CD4-positive, alpha-beta T cell (primary cell): ENCODE measurements at regions of chr1 and their contacts with region 1.

Region 1: DNA sequence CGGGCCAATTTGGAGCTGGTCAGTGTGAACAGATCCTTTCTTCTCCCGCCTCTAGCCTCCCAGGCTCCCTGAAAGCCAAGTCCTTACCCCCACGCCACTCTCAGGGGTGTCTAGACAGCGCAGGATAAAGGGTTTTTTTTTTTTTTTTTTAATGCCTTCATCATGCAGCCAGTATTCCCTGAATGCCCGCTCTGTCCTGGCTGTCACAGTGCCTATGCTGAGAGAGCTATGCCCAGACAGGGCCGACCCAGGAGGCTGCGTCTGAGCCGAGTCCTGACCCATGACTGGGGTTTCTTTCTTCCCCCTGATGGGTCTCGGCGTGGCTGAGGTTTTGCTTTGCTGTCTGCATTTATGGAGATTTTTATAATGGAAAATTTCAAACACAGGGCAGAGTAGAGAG is 18.3 kb downstream of the SPSB1 start:
- DNase-seq: no peak
- ATAC-seq: no peak
- H3K4me3 ChIP-seq: no peak overlapping the region
- H3K4me3 Mint-ChIP-seq: no peak overlapping the region
- H3K27ac ChIP-seq: no peak overlapping the region
- H3K27ac Mint-ChIP-seq: no peak overlapping the region
- H3K4me1 ChIP-seq: peaks cover 13% of the 10 kb centered on the region
- H3K4me1 Mint-ChIP-seq: peaks cover 26% of the 10 kb centered on the region
- H3K27me3 ChIP-seq: no peaks in the 10 kb centered on the region
- H3K27me3 Mint-ChIP-seq: no peaks in the 10 kb centered on the region
- CTCF ChIP-seq: no peak

Region 2: GRCh38 chr1:9362488-9362887 is 51.5 kb after region 1 on chr1:
- CTCF ChIA-PET with region 1: no interaction called
- POLR2A ChIA-PET with region 1: no interaction called
- intact Hi-C with region 1: loop called in 1 of 2 experiments (anchors 5 kb)
- DNase-seq: no peak
- ATAC-seq: no peak
- H3K4me3 ChIP-seq: no peak overlapping the region
- H3K4me3 Mint-ChIP-seq: no peak overlapping the region
- H3K27ac ChIP-seq: no peak overlapping the region
- H3K27ac Mint-ChIP-seq: no peak overlapping the region
- H3K4me1 ChIP-seq: peaks cover 2% of the 10 kb centered on the region
- H3K4me1 Mint-ChIP-seq: no peaks in the 10 kb centered on the region
- H3K27me3 ChIP-seq: no peaks in the 10 kb centered on the region
- H3K27me3 Mint-ChIP-seq: no peaks in the 10 kb centered on the region
- CTCF ChIP-seq: no peak

Region 3: DNA sequence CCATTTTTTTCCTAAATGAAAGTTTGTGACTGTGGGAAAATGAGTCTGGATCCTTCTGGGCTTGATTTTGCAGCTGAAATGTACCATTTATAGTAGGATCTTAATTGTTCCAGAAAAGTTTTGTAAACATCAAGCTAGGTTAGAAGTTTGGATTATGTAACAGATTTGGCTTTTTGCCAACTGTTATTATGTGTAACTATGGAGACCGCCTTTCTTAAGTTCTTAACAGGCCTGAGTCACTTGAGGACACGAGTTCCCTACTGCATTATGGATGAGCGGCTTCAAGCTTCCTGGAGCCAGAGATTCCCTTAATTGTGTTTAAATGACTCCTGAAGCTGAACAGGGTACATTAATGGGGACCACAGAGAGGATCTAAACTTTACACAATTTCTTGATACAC is 250.4 kb after region 1 on chr1:
- CTCF ChIA-PET with region 1: no interaction called
- POLR2A ChIA-PET with region 1: no interaction called
- intact Hi-C with region 1: loop called in 1 of 2 experiments (anchors 5 kb)
- DNase-seq: peak in 4 of 14 experiments; percentile 6 to 73 (median 47)
- ATAC-seq: peak; percentile 51
- H3K4me3 ChIP-seq: no peak overlapping the region
- H3K4me3 Mint-ChIP-seq: peak overlapping the region; percentile 15
- H3K27ac ChIP-seq: no peak overlapping the region
- H3K27ac Mint-ChIP-seq: peak overlapping the region; percentile 63
- H3K4me1 ChIP-seq: peaks cover 22% of the 10 kb centered on the region
- H3K4me1 Mint-ChIP-seq: peaks cover 41% of the 10 kb centered on the region
- H3K27me3 ChIP-seq: no peaks in the 10 kb centered on the region
- H3K27me3 Mint-ChIP-seq: no peaks in the 10 kb centered on the region
- CTCF ChIP-seq: no peak